Panc1 (cell line): ENCODE measurements at regions of chr2 and their contacts with region 1.

Region 1: DNA sequence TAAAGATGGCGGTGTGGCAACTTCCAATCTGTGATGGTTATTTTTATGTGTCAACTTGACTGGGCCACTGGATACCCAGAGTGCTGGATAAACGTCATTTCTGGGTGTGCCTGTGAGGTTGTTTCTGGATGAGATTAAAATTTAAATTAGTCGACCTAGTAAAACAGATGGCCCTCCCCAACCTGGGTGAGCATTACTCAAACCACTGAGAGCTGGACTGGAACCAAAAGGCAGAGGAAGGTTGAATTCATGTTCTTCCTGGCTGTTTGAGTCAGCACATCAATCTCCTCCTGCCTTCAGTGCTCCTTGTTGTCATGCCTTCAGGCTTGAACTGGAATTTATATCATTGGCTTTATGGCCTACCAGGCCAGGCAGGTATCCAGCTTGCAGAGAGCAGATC is 190.8 kb upstream of the RGPD4 start:
- DNase-seq: no peak
- ATAC-seq: no peak
- H3K4me3 ChIP-seq: no peak overlapping the region
- H3K27ac ChIP-seq: no peak overlapping the region
- H3K4me1 ChIP-seq: no peaks in the 10 kb centered on the region
- H3K27me3 ChIP-seq: no peaks in the 10 kb centered on the region
- CTCF ChIP-seq: no peak

Region 2: GRCh38 chr2:106789197-106789596 is 846.7 kb before region 1 on chr2:
- CTCF ChIA-PET with region 1: no interaction called
- POLR2A ChIA-PET with region 1: no interaction called
- in situ Hi-C with region 1: no loop called
- intact Hi-C with region 1: no loop called
- DNase-seq: no peak
- ATAC-seq: no peak
- H3K4me3 ChIP-seq: no peak overlapping the region
- H3K27ac ChIP-seq: no peak overlapping the region
- H3K4me1 ChIP-seq: no peaks in the 10 kb centered on the region
- H3K27me3 ChIP-seq: no peaks in the 10 kb centered on the region
- CTCF ChIP-seq: no peak

Region 3: DNA sequence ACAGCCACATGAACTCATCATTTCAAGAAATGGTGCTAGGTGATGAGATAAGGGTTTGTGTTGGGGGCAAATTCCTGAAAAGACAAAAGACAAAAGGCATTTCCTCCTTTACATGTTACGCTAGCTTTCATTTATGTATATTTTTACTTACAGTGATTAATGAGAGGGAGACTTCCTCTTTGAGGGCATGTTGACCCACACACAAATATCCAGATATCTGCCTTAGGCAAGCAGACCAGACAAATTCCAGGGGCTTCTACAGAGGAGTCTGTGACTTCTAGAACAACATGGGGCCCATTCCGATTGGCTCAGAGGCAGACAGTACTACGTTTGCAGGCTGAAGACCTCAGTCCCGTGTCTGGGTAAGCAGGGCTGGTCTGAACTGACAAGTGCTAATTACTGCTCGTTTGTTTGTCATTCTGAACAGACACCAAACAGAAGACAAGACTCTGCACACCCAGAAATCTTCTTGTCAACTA is 675.2 kb before region 1 on chr2:
- CTCF ChIA-PET with region 1: no interaction called
- POLR2A ChIA-PET with region 1: interaction called, 16 read pairs
- in situ Hi-C with region 1: no loop called
- intact Hi-C with region 1: no loop called
- DNase-seq: no peak
- ATAC-seq: no peak
- H3K4me3 ChIP-seq: no peak overlapping the region
- H3K27ac ChIP-seq: no peak overlapping the region
- H3K4me1 ChIP-seq: no peaks in the 10 kb centered on the region
- H3K27me3 ChIP-seq: no peaks in the 10 kb centered on the region
- CTCF ChIP-seq: no peak